ENCODE measurements at regions of chr4 and their contacts with region 1.

Region 1: GRCh38 chr4:176927664-176928063 is 134.9 kb upstream of the VEGFC start:
- DNase-seq: no peak

Region 2: GRCh38 chr4:176939445-176939844 is 11.8 kb after region 1 on chr4:
- intact Hi-C with region 1: loop called in 1 of 2 experiments (anchors 1 kb)
- DNase-seq: no peak

Region 3: GRCh38 chr4:177638871-177639270 is 711.2 kb after region 1 on chr4:
- intact Hi-C with region 1: no loop called
- DNase-seq: no peak

Measured in posterior vena cava (tissue), 2 donors.